HepG2 (cell line): ENCODE measurements at regions of chr11 and their contacts with region 1.

Region 1: GRCh38 chr11:63829823-63830489 is 9.0 kb upstream of the MARK2 start:
- DNase-seq: peak; percentile 52
- ATAC-seq: peak; percentile 94
- H3K4me3 ChIP-seq: no peak overlapping the region
- H3K27ac ChIP-seq: no peak overlapping the region
- H3K4me1 ChIP-seq: peaks cover 5% of the 10 kb centered on the region
- H3K27me3 ChIP-seq: no peaks in the 10 kb centered on the region
- CTCF ChIP-seq: peak; percentile 94
- EP300 ChIP-seq: no peak
- POLR2A ChIP-seq: no peak
- RAD21 ChIP-seq: peak; percentile 83

Region 2: GRCh38 chr11:63906585-63906984 is 76.6 kb after region 1 on chr11:
- CTCF ChIA-PET with region 1: no interaction called
- POLR2A ChIA-PET with region 1: interaction called, 3 read pairs
- in situ Hi-C with region 1: no loop called
- intact Hi-C with region 1: loop called (anchors 1 kb)
- DNase-seq: no peak
- ATAC-seq: peak; percentile 8; the same call in 1 of the 3 replicates
- H3K4me3 ChIP-seq: no peak overlapping the region
- H3K27ac ChIP-seq: no peak overlapping the region
- H3K4me1 ChIP-seq: no peaks in the 10 kb centered on the region
- H3K27me3 ChIP-seq: no peaks in the 10 kb centered on the region
- CTCF ChIP-seq: peak; percentile 28; the same call in 1 of the 2 replicates
- EP300 ChIP-seq: no peak
- POLR2A ChIP-seq: no peak
- RAD21 ChIP-seq: no peak

Region 3: GRCh38 chr11:63945477-63946163 is 115.7 kb after region 1 on chr11:
- CTCF ChIA-PET with region 1: interaction called, 6 read pairs
- POLR2A ChIA-PET with region 1: interaction called, 5 read pairs
- in situ Hi-C with region 1: loop called (anchors 10 kb)
- intact Hi-C with region 1: loop called (anchors 1 kb)
- DNase-seq: peak; percentile 62
- ATAC-seq: peak; percentile 94
- H3K4me3 ChIP-seq: 0 out of 6 replicates have a peak overlapping the region, but pooled peaks of 1 of the 3 experiments have one; percentile 2
- H3K27ac ChIP-seq: peak overlapping the region; percentile 54
- H3K4me1 ChIP-seq: peaks cover 28% of the 10 kb centered on the region
- H3K27me3 ChIP-seq: no peaks in the 10 kb centered on the region
- CTCF ChIP-seq: peak; percentile 84
- EP300 ChIP-seq: no peak
- POLR2A ChIP-seq: no peak
- RAD21 ChIP-seq: peak; percentile 73